ENCODE measurements at regions of chr1 and their contacts with region 1.

Region 1: DNA sequence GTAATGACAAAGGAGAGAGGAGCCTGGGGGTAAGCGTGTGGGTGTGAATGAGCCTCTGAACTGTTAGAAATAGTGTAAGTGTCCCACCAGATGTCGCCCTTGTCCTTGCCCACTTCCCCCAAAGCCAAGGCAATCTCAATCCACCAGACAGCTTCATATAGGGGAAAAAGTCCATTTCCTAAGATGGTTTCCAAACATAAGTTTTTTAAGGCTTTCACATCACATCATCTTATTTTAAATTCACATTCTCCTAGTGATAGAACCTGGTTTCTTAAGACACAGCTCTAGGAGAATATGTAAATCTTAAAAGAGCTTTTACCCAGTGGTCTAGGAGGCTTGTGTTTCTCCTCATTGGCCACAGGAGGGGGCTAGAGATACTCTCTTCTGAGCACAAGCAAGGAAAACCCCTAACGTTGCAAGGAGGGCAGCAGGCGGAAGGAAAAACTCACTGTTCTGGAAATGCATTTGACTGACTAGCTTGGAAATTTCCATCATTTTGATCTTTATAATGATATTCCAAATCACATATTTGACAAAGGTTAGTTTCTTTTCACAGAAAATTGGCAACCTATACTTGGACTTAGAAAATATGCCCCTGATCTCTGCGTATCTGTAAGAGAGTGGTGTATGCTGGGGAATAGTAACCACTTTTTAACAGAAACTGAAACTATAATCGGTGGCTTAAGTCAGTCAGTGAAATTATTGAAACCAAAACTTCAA is 51.9 kb upstream of the LPAR3 start:
- DNase-seq: peak; percentile 88
- ATAC-seq: peak; percentile 80
- H3K4me3 ChIP-seq: peak overlapping the region; percentile 42
- H3K27ac ChIP-seq: no peak overlapping the region
- H3K4me1 ChIP-seq: peaks cover 27% of the 10 kb centered on the region
- H3K27me3 ChIP-seq: no peaks in the 10 kb centered on the region
- CTCF ChIP-seq: peak; percentile 96

Region 2: GRCh38 chr1:84996846-84997666 is 52.1 kb after region 1 on chr1 and contains the start of gene MCOLN2:
- CTCF ChIA-PET with region 1: interaction called, 4 read pairs
- POLR2A ChIA-PET with region 1: no interaction called
- intact Hi-C with region 1: loop called (anchors 2 kb)
- DNase-seq: peak; percentile 57
- ATAC-seq: peak; percentile 79
- H3K4me3 ChIP-seq: peak within 1 kb of the TSS; percentile 77
- H3K27ac ChIP-seq: no peak within 1 kb of the TSS
- H3K4me1 ChIP-seq: peaks cover 17% of the 10 kb centered on the region
- H3K27me3 ChIP-seq: no peaks in the 10 kb centered on the region
- CTCF ChIP-seq: no peak
- total RNA-seq, gene MCOLN2: 11.7 and 24.6 TPM in 2 replicates

Region 3: DNA sequence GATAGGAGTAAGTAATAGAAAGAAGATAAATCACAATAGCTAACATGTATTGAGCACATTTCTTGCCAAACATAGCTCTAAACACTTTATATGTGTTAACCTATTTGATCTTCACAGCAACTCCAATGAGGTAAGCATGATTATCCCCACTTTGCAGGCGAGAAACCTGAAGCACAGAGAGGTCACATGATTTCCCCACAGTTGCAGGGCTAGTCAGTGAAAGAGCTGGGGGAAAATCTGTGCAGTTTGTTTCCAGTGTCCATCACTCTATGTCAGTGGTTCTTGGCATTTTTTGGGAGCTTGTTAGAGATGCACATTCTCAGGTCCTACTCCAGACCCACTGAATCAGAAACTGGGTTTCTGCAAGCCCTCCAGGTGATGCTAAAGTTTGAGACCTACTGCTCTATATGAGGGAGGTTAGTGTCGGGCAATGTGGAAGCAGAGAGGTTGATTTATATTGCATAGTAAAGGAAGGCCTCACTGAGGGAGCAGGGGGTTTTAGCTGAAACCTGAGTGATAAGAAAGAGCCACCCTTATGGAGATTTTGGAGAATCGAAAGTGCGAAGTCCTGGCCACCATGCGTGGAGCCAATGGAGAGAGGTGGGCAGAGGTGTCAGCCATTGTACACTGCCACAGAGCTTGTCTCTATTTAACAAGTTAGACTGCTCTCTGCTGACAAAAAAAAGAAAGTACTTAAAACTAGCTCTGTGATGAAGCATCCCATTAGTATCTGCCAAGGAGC is 82.5 kb after region 1 on chr1:
- CTCF ChIA-PET with region 1: interaction called, 40 read pairs
- POLR2A ChIA-PET with region 1: no interaction called
- intact Hi-C with region 1: loop called (anchors 1 kb)
- DNase-seq: peak; percentile 21
- ATAC-seq: peak; percentile 81
- H3K4me3 ChIP-seq: no peak overlapping the region
- H3K27ac ChIP-seq: no peak overlapping the region
- H3K4me1 ChIP-seq: no peaks in the 10 kb centered on the region
- H3K27me3 ChIP-seq: no peaks in the 10 kb centered on the region
- CTCF ChIP-seq: peak; percentile 41; the same call in 1 of the 2 replicates

Region 4: GRCh38 chr1:85078903-85079302 is 134.0 kb after region 1 on chr1:
- CTCF ChIA-PET with region 1: interaction called, 5 read pairs
- POLR2A ChIA-PET with region 1: no interaction called
- intact Hi-C with region 1: loop called (anchors 1 kb)
- DNase-seq: peak; percentile 33
- ATAC-seq: peak; percentile 75
- H3K4me3 ChIP-seq: no peak overlapping the region
- H3K27ac ChIP-seq: no peak overlapping the region
- H3K4me1 ChIP-seq: no peaks in the 10 kb centered on the region
- H3K27me3 ChIP-seq: no peaks in the 10 kb centered on the region
- CTCF ChIP-seq: peak; percentile 45; the same call in 1 of the 2 replicates

Region 5: DNA sequence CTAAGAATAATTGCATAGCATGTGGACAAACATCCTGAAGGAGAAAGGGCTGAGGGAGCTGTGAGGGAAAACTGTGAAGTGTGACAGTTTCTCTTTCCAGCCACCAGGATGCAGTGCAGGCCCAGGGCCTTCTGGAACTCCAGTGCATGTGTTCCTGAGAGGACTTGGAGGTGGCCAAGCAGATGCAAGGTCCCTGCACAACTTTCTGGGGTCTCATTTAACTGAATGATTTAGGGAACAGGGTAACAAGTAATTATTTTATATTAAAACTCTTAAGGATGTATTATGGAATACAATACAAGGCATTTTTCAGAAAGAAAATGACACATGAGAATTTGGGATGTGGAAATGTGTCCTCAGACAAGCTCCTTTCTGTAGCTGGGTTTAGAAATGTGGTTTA is 164.5 kb after region 1 on chr1:
- CTCF ChIA-PET with region 1: interaction called, 4 read pairs
- POLR2A ChIA-PET with region 1: no interaction called
- intact Hi-C with region 1: loop called (anchors 10 kb)
- DNase-seq: peak; percentile 79
- ATAC-seq: peak; percentile 99
- H3K4me3 ChIP-seq: no peak overlapping the region
- H3K27ac ChIP-seq: no peak overlapping the region
- H3K4me1 ChIP-seq: no peaks in the 10 kb centered on the region
- H3K27me3 ChIP-seq: no peaks in the 10 kb centered on the region
- CTCF ChIP-seq: peak; percentile 86

Region 6: GRCh38 chr1:85259118-85259911 is 314.4 kb after region 1 on chr1 and contains the start of gene C1orf52:
- CTCF ChIA-PET with region 1: interaction called, 14 read pairs
- POLR2A ChIA-PET with region 1: no interaction called
- intact Hi-C with region 1: loop called (anchors 1 kb)
- DNase-seq: peak; percentile 94
- ATAC-seq: peak; percentile 82
- H3K4me3 ChIP-seq: peak within 1 kb of the TSS; percentile 97
- H3K27ac ChIP-seq: peak within 1 kb of the TSS; percentile 49
- H3K4me1 ChIP-seq: peaks cover 27% of the 10 kb centered on the region
- H3K27me3 ChIP-seq: no peaks in the 10 kb centered on the region
- CTCF ChIP-seq: peak; percentile 90
- total RNA-seq, gene C1orf52: 59.9 and 61.0 TPM in 2 replicates